Naive thymus-derived CD4-positive, alpha-beta T cell (primary cell): ENCODE measurements at regions of chr2 and their contacts with region 1.

Region 1: DNA sequence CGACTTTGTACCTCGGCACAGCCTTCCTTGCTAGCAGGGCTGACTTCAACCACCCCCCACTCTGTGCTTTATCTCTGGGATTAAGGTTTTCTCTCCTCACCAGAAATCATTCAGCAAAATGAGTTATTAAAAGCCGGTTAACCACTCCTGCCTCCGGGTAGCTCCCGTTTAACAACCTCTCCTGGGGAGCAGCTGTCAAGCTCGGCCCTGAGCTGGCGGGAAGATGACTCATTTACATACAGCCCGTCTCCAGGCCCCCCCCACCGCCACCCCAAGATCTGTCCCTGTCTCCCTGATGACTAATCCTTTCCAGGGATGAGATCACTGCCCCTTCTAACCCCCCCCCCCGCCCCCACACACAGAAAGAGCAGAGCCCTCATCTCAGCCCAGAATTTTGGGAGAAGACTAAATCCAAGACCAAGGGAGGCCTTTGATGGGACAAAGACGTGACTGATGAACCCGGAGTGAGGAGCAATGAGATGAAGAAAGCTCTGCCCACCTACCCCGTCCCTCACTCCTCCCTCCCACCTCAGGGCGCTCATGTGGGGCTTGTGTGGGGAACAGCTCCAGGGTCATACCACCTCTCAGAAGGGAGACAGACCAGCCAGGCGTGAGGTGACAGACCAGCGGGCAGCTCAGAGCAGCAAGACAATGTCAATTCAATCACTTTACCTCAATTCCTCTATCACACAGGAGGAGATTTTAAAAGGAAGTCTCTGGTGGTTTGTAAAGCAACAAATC is 131.4 kb downstream of the MSH2 start:
- DNase-seq: no peak
- ATAC-seq: no peak
- H3K4me3 ChIP-seq: no peak overlapping the region
- H3K4me3 Mint-ChIP-seq: no peak overlapping the region
- H3K27ac ChIP-seq: no peak overlapping the region
- H3K27ac Mint-ChIP-seq: peak overlapping the region in 1 of 9 donors; percentile 31
- H3K4me1 ChIP-seq: no peaks in the 10 kb centered on the region
- H3K4me1 Mint-ChIP-seq: no peaks in the 10 kb centered on the region
- H3K27me3 ChIP-seq: no peaks in the 10 kb centered on the region
- H3K27me3 Mint-ChIP-seq: peaks cover 0 to 16% (median 0%) of the 10 kb centered on the region in 5 donors

Region 2: GRCh38 chr2:47414682-47415458 is 119.5 kb before region 1 on chr2:
- CTCF ChIA-PET with region 1: no interaction called
- POLR2A ChIA-PET with region 1: interaction called, 10 read pairs
- intact Hi-C with region 1: no loop called
- DNase-seq: no peak
- ATAC-seq: no peak
- H3K4me3 ChIP-seq: no peak overlapping the region
- H3K4me3 Mint-ChIP-seq: no peak overlapping the region
- H3K27ac ChIP-seq: no peak overlapping the region
- H3K27ac Mint-ChIP-seq: no peak overlapping the region
- H3K4me1 ChIP-seq: no peaks in the 10 kb centered on the region
- H3K4me1 Mint-ChIP-seq: peaks cover 0 to 3% (median 0%) of the 10 kb centered on the region in 7 donors
- H3K27me3 ChIP-seq: no peaks in the 10 kb centered on the region
- H3K27me3 Mint-ChIP-seq: no peaks in the 10 kb centered on the region